A549 (cell line): ENCODE measurements at regions of chr1 and their contacts with region 1.

Region 1: GRCh38 chr1:156689035-156689952 is 12.1 kb upstream of the NES start:
- DNase-seq: peak; percentile 86 to 92
- ATAC-seq: peak; percentile 88 to 93
- H3K4me3 ChIP-seq: peak overlapping the region; percentile 36
- H3K27ac ChIP-seq: peak overlapping the region; percentile 57 to 78; a peak in 5 of 6 replicates
- H3K4me1 ChIP-seq: peaks cover 55% of the 10 kb centered on the region
- CTCF ChIP-seq: peak; percentile 77
- EP300 ChIP-seq: no peak
- POLR2A ChIP-seq: no peak
- RAD21 ChIP-seq: peak; percentile 91 to 97

Region 2: GRCh38 chr1:156489166-156489934 is 199.9 kb before region 1 on chr1:
- CTCF ChIA-PET with region 1: no interaction called
- POLR2A ChIA-PET with region 1: no interaction called
- DNase-seq: no peak
- ATAC-seq: peak; percentile 3 to 31; a peak in 3 of 6 replicates
- H3K4me3 ChIP-seq: no peak overlapping the region
- H3K27ac ChIP-seq: peak overlapping the region; percentile 48 to 75; a peak in 3 of 6 replicates
- H3K4me1 ChIP-seq: peaks cover 64% of the 10 kb centered on the region
- CTCF ChIP-seq: no peak
- EP300 ChIP-seq: no peak
- POLR2A ChIP-seq: no peak
- RAD21 ChIP-seq: no peak

Region 3: GRCh38 chr1:156510709-156511108 is 178.6 kb before region 1 on chr1:
- CTCF ChIA-PET with region 1: no interaction called
- POLR2A ChIA-PET with region 1: no interaction called
- DNase-seq: no peak
- ATAC-seq: peak in 1 of 2 experiments; percentile 35; a peak in 3 of 6 replicates
- H3K4me3 ChIP-seq: no peak overlapping the region
- H3K27ac ChIP-seq: peak overlapping the region; percentile 69 to 100
- H3K4me1 ChIP-seq: peaks cover 51% of the 10 kb centered on the region
- CTCF ChIP-seq: no peak
- EP300 ChIP-seq: no peak
- POLR2A ChIP-seq: no peak
- RAD21 ChIP-seq: no peak

Region 4: GRCh38 chr1:156641761-156642264 is 47.5 kb before region 1 on chr1 and contains the start of gene BCAN:
- CTCF ChIA-PET with region 1: interaction called, 27 read pairs
- POLR2A ChIA-PET with region 1: no interaction called
- DNase-seq: no peak
- ATAC-seq: no peak
- H3K4me3 ChIP-seq: no peak within 1 kb of the TSS
- H3K27ac ChIP-seq: no peak within 1 kb of the TSS
- H3K4me1 ChIP-seq: no peaks in the 10 kb centered on the region
- CTCF ChIP-seq: no peak
- EP300 ChIP-seq: no peak
- POLR2A ChIP-seq: no peak
- RAD21 ChIP-seq: no peak
- polyA plus RNA-seq, gene BCAN: 0.12 TPM in 1 of 2 replicates, not detected in the other

Region 5: GRCh38 chr1:156677616-156678596 is 11.4 kb before region 1 on chr1:
- CTCF ChIA-PET with region 1: interaction called, 203 read pairs
- POLR2A ChIA-PET with region 1: no interaction called
- DNase-seq: peak; percentile 72 to 85
- ATAC-seq: peak; percentile 72 to 84; a peak in 5 of 6 replicates
- H3K4me3 ChIP-seq: peak overlapping the region; percentile 30; the same call in 2 of the 3 replicates
- H3K27ac ChIP-seq: peak overlapping the region; percentile 68 to 75
- H3K4me1 ChIP-seq: peaks cover 13% of the 10 kb centered on the region
- CTCF ChIP-seq: peak; percentile 96
- EP300 ChIP-seq: no peak
- POLR2A ChIP-seq: no peak
- RAD21 ChIP-seq: peak; percentile 94 to 96

Region 6: GRCh38 chr1:156767101-156767878 is 78.0 kb after region 1 on chr1 and contains the start of gene PRCC:
- CTCF ChIA-PET with region 1: interaction called, 16 read pairs
- POLR2A ChIA-PET with region 1: no interaction called
- DNase-seq: peak; percentile 90 to 100
- ATAC-seq: peak; percentile 97
- H3K4me3 ChIP-seq: peak within 1 kb of the TSS; percentile 83
- H3K27ac ChIP-seq: peak within 1 kb of the TSS; percentile 91 to 94
- H3K4me1 ChIP-seq: peaks cover 24% of the 10 kb centered on the region
- CTCF ChIP-seq: no peak
- EP300 ChIP-seq: no peak
- POLR2A ChIP-seq: peak; percentile 22
- RAD21 ChIP-seq: no peak
- polyA plus RNA-seq, gene PRCC: 52.0 and 65.3 TPM in 2 replicates

Region 7: DNA sequence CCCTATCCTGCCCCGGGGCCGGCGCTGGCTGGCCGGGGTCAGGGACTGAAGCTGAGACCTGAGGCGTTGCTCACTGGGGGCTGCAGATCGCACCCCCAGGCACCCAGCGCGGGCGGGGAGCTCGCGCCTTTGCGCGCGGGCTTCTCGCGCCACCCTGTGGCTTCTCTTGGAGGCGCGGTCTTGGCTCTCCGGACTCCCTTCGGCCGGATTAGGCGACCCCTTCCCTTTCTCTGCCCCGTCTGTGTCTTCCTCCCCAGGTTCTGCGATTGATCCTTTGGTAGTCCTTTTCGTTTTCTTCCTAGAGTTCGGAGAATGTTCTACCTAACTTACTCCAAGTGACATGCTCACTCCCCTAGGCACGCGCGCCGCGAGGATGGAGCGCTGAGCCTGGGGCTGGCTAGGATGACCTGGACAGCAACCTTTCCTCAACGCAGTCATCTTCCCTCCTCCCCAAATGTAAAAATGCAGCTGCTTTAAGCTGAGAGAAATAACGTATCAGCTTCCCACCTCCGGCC is 170.9 kb after region 1 on chr1:
- CTCF ChIA-PET with region 1: interaction called, 85 read pairs
- POLR2A ChIA-PET with region 1: no interaction called
- DNase-seq: peak; percentile 48 to 70
- ATAC-seq: peak; percentile 73 to 87
- H3K4me3 ChIP-seq: peak overlapping the region; percentile 46
- H3K27ac ChIP-seq: peak overlapping the region in 1 of 2 experiments; percentile 59; a peak in 3 of 6 replicates
- H3K4me1 ChIP-seq: peaks cover 8% of the 10 kb centered on the region; the same call in 1 of the 3 replicates
- CTCF ChIP-seq: peak; percentile 96
- EP300 ChIP-seq: no peak
- POLR2A ChIP-seq: no peak
- RAD21 ChIP-seq: peak; percentile 79 to 92

Region 8: DNA sequence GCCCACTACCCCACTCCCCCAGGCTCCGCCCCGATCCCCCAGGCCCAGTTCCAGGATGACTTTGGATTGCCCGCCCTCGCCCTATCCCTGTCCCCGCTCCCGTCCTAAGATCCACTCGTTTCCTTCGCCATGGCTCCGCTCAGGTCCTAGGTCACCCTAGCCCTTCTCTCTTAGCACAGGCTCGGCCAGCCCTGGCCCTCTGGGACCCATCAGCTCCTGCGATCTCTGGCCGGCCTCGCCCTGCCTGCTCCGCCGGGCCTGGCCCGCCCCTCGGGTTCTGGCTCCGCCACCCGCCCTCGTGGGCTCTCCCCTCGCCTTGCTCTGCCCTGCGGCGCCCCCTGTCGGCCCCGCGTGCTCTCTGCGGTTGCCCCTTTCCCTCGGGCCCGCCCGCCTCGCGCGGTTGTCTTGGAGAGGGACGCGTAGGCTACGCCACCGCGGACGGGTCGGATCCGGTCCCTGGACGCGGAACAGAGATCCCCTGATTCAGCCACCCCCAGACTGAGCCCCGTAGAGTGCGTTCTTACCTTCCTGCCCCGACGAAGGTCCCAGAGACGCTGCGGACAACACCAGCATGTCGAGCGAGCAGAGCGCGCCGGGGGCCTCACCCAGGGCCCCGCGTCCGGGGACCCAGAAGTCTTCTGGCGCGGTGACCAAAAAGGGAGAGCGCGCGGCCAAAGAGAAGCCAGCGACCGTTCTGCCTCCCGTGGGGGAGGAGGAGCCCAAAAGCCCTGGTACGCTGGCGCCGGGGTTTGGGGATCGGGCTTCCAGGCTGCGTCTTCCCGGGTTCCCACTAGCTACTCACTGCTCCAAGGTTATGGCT is 231.1 kb after region 1 on chr1 and contains the start of gene LRRC71:
- CTCF ChIA-PET with region 1: interaction called, 38 read pairs
- POLR2A ChIA-PET with region 1: no interaction called
- DNase-seq: peak; percentile 79 to 90
- ATAC-seq: peak; percentile 87 to 97
- H3K4me3 ChIP-seq: peak within 1 kb of the TSS; percentile 29
- H3K27ac ChIP-seq: peak within 1 kb of the TSS; percentile 65 to 86
- H3K4me1 ChIP-seq: peaks cover 10% of the 10 kb centered on the region
- CTCF ChIP-seq: peak; percentile 94
- EP300 ChIP-seq: no peak
- POLR2A ChIP-seq: peak; percentile 20; the same call in 1 of the 2 replicates
- RAD21 ChIP-seq: peak; percentile 89 to 97
- polyA plus RNA-seq, gene LRRC71: 0.15 TPM in 1 of 2 replicates, not detected in the other